B cell (primary cell): ENCODE measurements at regions of chr15 and their contacts with region 1.

Region 1: DNA sequence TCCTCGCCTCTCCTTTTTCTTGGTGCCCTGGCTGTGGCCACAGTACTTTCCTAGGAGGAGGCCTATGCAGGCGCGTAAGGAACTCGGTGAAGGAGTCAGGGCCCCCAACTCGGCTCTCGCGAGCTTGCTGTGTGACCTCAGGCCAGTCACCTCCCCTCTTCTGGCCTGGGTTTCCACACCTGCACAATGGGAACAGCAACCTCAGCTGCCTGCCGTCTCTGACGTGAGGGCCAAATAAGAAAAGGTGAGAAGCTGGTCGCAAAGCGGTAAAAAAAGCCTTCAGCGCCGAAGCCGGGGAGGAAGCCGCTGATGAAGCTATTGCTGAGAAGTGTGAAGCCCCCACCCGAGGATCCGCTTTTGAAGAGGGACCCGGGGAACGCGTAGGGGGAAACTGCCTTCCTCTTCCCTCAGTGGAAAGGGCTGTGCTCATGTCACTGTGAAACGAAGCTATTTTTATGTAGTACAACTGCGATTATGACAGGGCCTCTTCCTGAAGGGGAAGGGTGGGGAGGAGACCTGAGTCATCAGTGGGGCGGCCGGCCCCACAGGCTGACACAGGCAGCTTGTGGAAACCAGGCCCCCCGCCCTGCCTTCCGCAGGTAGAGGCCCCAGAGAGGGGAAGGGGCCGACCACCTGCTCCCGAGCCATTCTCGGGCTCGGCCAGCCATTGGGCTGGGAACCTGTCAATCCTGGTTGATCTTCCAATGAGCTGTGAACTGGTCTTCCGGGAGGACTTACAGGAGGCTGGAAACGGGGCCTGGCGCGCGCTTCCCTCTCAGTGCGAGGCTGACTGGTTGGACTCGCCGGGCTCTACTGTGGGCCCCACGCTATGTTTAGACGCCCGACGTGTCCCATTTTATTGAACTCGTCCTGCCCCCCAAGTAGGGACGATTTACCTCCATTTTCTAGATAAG is 18.0 kb upstream of the ANKDD1A start:
- DNase-seq: peak; percentile 96
- ATAC-seq: peak; percentile 77
- H3K4me3 ChIP-seq: peak overlapping the region; percentile 32 to 71 (median 37)
- H3K4me3 Mint-ChIP-seq: peak overlapping the region; percentile 90
- H3K27ac ChIP-seq: peak overlapping the region; percentile 86 to 94
- H3K27ac Mint-ChIP-seq: peak overlapping the region; percentile 99
- H3K4me1 ChIP-seq: peaks cover 50 to 65% of the 10 kb centered on the region in 2 donors
- H3K4me1 Mint-ChIP-seq: peaks cover 68% of the 10 kb centered on the region
- H3K27me3 ChIP-seq: no peaks in the 10 kb centered on the region
- H3K27me3 Mint-ChIP-seq: no peaks in the 10 kb centered on the region
- CTCF ChIP-seq: no peak

Region 2: GRCh38 chr15:64731012-64731806 is 162.5 kb before region 1 on chr15:
- CTCF ChIA-PET with region 1: interaction called, 23 read pairs
- POLR2A ChIA-PET with region 1: interaction called, 3 read pairs
- intact Hi-C with region 1: no loop called
- DNase-seq: peak; percentile 88
- ATAC-seq: peak; percentile 75
- H3K4me3 ChIP-seq: no peak overlapping the region
- H3K4me3 Mint-ChIP-seq: no peak overlapping the region
- H3K27ac ChIP-seq: no peak overlapping the region
- H3K27ac Mint-ChIP-seq: peak overlapping the region; percentile 46
- H3K4me1 ChIP-seq: peaks cover 4 to 7% of the 10 kb centered on the region in 2 donors
- H3K4me1 Mint-ChIP-seq: peaks cover 10% of the 10 kb centered on the region
- H3K27me3 ChIP-seq: peaks cover 0 to 7% (median 2%) of the 10 kb centered on the region in 4 experiments
- H3K27me3 Mint-ChIP-seq: peaks cover 6% of the 10 kb centered on the region
- CTCF ChIP-seq: peak; percentile 94

Region 3: DNA sequence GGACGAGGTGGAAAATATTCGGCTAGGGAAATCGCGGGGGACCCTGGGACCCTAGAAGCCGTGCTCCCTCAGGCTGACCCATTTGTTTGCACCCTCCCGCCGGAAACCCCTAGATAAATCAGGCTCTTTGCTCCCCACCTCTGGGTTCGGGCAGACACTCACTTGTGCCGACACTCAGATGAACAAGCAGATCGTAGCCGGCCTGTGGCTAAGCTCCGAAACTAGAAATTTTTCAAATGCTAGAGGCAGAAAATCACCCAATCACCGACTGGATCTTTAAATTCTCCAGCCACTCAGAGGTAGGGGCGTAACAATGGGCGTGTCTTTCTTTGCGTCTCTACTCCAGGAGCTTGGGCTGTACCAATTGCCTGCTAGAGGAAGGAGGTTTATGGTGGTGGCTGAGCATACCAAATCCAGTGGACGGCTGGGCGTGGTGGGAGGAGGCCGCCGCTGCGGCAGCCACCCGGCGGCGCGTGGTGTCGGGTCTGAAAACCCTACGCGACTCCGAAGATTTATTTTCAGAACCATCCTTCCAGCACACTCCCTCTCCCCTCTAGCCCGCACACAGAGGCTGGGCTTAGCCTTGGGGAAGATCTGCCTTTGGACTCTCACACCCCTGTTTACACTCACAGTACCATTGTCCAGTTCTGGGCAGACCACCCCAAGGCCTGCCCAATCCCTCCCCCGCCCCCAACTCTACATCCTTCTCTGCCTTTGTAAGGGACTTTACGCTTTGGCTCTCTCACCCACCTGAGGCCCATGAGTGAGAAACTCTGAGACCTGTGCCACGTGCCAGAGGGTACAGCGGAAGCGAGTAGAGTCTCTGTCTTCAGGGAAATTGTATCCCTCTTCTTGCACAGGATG is 68.1 kb before region 1 on chr15 and contains the start of gene PIF1:
- CTCF ChIA-PET with region 1: interaction called, 4 read pairs
- POLR2A ChIA-PET with region 1: interaction called, 13 read pairs
- intact Hi-C with region 1: loop called (anchors 1 kb)
- DNase-seq: peak; percentile 94
- ATAC-seq: peak; percentile 95
- H3K4me3 ChIP-seq: peak within 1 kb of the TSS; percentile 42 to 73 (median 56)
- H3K4me3 Mint-ChIP-seq: peak within 1 kb of the TSS; percentile 91
- H3K27ac ChIP-seq: peak within 1 kb of the TSS; percentile 31 to 73
- H3K27ac Mint-ChIP-seq: peak within 1 kb of the TSS; percentile 89
- H3K4me1 ChIP-seq: peaks cover 22 to 33% of the 10 kb centered on the region in 2 donors
- H3K4me1 Mint-ChIP-seq: peaks cover 31% of the 10 kb centered on the region
- H3K27me3 ChIP-seq: peaks cover 0 to 14% (median 2%) of the 10 kb centered on the region in 4 experiments
- H3K27me3 Mint-ChIP-seq: no peaks in the 10 kb centered on the region
- CTCF ChIP-seq: no peak
- total RNA-seq, gene PIF1: 2.0 and 2.8 TPM in 2 replicates

Region 4: DNA sequence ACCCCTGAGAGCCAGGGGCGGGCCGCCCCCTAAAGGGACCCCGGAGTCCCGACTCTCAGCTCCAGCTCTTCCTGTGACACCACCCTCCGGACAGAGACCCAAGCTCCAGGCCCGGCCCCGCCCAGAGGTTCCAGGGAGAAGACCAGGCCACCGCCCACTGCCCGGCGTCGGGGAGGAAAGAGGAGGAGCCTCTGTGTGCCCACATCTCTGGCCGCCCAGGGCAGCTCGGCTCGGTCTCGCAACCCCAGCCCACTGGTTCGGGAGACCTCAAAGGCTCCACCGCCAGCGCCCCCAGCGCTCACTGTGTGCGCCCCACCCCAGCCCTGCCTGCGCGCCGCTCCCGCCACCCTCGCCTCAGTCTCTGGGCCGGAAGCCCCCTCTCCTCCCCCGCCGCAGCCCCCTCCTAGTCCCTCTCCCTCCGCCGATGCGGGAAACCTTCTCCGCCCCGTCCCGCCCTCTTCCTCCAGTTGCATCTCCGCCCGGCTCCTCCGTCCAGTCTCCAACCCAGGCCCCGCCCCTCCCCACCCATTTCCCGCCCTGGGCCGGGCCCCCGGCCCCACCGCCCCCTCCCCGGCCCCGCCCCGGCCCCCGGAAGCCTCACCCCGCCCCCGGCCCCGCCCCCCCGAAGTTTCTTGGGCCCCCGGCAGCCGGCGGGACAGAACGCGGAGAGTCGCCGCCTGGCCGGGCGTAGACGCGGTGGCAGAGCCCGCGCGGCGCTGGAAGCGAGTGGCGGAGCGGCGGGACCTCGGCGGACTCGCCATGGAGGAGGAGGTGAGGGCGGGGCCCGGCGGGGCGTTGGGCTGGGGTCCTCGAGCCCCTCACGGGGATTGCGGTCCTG is 52.3 kb before region 1 on chr15 and contains the start of gene PLEKHO2:
- CTCF ChIA-PET with region 1: interaction called, 81 read pairs
- POLR2A ChIA-PET with region 1: interaction called, 32 read pairs
- intact Hi-C with region 1: loop called (anchors 1 kb)
- DNase-seq: peak; percentile 90
- ATAC-seq: peak; percentile 76
- H3K4me3 ChIP-seq: peak within 1 kb of the TSS; percentile 67 to 88 (median 72)
- H3K4me3 Mint-ChIP-seq: peak within 1 kb of the TSS; percentile 91
- H3K27ac ChIP-seq: peak within 1 kb of the TSS; percentile 65 to 85
- H3K27ac Mint-ChIP-seq: peak within 1 kb of the TSS; percentile 84
- H3K4me1 ChIP-seq: peaks cover 45 to 53% of the 10 kb centered on the region in 2 donors
- H3K4me1 Mint-ChIP-seq: peaks cover 58% of the 10 kb centered on the region
- H3K27me3 ChIP-seq: no peaks in the 10 kb centered on the region
- H3K27me3 Mint-ChIP-seq: no peaks in the 10 kb centered on the region
- CTCF ChIP-seq: peak; percentile 53
- total RNA-seq, gene PLEKHO2: 23.1 and 25.4 TPM in 2 replicates

Region 5: DNA sequence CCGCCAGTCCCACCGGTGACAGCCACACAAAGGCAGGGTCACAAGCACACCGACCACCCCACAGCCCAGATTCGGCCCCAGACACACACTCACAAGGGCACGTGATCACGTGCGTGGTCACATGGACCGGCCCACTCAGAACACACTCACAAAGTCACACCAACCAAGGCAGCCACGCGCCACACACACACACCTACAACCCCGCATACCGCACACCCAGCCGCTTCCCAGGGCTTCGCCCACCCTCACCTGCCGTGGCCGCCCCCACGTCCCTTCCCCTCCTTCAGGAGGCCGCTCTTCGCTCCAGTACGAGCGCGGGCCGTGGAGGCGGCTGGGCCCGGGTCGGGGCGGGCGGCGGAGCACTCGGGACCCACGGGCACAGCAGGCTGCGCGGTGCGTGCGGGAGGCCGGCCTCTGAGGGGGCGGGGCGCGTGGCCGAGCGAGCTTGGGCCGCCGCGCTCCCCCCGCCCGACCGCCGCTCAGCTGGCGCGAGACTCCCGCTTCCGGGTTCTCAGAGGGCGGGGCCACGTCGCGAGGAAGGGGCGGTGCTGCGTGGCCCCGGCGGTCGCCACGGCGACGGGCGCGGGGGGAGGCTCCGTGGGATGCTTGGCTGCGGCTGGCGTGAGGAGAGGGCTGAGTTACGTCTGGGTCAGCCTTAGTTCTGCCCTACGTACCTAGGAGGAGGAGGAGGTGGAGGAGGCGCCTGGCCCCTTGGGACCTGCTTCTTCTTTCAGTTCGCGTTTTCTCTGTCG is 95.9 kb after region 1 on chr15 and contains the start of gene SPG21:
- CTCF ChIA-PET with region 1: interaction called, 4 read pairs
- POLR2A ChIA-PET with region 1: no interaction called
- intact Hi-C with region 1: loop called (anchors 1 kb)
- DNase-seq: peak; percentile 99
- ATAC-seq: peak; percentile 95
- H3K4me3 ChIP-seq: peak within 1 kb of the TSS; percentile 70 to 97 (median 88)
- H3K4me3 Mint-ChIP-seq: peak within 1 kb of the TSS; percentile 97
- H3K27ac ChIP-seq: peak within 1 kb of the TSS; percentile 83 to 94
- H3K27ac Mint-ChIP-seq: peak within 1 kb of the TSS; percentile 96
- H3K4me1 ChIP-seq: peaks cover 28 to 31% of the 10 kb centered on the region in 2 donors
- H3K4me1 Mint-ChIP-seq: peaks cover 48% of the 10 kb centered on the region
- H3K27me3 ChIP-seq: no peaks in the 10 kb centered on the region
- H3K27me3 Mint-ChIP-seq: no peaks in the 10 kb centered on the region
- CTCF ChIP-seq: no peak
- total RNA-seq, gene SPG21: 94.4 and 95.5 TPM in 2 replicates

Region 6: DNA sequence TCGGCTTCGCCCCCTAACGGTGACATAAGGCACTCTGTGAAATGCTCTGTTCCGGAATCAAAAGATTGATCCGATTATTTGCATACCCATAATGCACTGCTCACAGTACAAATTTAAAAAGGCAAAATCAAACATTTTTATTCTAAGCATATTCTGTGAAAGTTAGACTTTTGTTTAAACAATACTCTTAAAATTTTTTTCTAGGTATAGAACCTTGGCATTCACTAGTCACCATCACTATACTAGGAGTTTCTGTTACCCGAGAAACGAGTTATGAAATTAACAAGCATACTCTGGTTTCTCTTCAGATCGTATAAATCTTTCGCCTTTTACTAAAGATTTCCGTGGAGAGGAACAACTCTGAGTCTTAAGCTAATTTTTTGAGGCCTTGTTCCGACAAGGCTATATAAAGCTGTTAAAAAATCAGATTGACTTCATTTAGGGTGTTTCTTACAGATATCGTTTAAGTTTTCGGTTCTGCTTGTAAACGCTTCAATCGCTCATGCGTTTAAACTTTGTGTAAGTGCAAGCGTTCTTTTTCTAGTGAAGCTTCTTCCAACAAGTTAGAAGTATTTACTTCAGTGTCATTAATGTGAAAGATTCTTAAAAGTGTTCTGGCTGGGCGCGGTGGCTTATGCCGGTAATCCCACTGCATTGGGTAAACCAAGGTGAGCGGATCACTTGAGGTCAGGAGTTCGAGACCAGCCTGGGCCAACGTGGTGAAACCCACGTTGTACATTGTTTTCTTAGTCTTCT is 410.8 kb after region 1 on chr15 and contains the start of gene RNU5B-1:
- CTCF ChIA-PET with region 1: interaction called, 3 read pairs
- POLR2A ChIA-PET with region 1: interaction called, 4 read pairs
- intact Hi-C with region 1: loop called (anchors 1 kb)
- DNase-seq: peak; percentile 94
- ATAC-seq: peak; percentile 77
- H3K4me3 ChIP-seq: peak within 1 kb of the TSS; percentile 56 to 83 (median 67)
- H3K4me3 Mint-ChIP-seq: peak within 1 kb of the TSS; percentile 96
- H3K27ac ChIP-seq: peak within 1 kb of the TSS; percentile 95 to 98
- H3K27ac Mint-ChIP-seq: peak within 1 kb of the TSS; percentile 93
- H3K4me1 ChIP-seq: peaks cover 7 to 19% of the 10 kb centered on the region in 2 donors
- H3K4me1 Mint-ChIP-seq: peaks cover 28% of the 10 kb centered on the region
- H3K27me3 ChIP-seq: no peaks in the 10 kb centered on the region
- H3K27me3 Mint-ChIP-seq: no peaks in the 10 kb centered on the region
- CTCF ChIP-seq: peak; percentile 96
- total RNA-seq, gene RNU5B-1: 17.4 and 21.7 TPM in 2 replicates